Common myeloid progenitor, CD34-positive (primary cell): ENCODE measurements at regions of chr7 and their contacts with region 1.

Region 1: DNA sequence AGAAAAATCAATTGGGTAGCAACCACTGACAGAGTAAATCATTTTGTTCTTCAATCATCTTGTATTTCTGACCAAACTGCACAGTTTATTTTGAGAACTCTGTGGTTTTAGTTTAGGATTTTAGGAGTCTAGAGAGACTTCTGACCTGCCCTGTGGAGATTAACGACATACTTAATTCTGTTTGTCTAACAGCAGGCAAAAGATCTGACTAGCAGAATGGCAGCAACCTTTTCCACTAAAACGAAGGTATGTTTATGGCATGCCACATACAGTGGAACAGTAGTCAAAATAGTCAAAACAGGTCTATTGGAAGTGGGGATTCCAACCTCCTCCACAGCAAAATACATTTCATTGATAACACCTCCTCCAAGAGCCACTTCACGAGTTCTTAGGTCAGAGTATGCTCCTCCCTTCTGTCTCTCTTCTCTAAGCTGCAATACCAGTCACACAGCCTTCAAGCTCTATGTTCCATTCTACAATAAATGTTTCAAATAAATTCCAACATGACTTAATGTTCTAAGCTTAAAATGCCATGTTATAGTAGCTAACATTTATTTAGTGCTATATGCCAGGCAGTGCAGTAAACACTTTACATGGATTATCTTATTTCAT is 34.4 kb downstream of the NRCAM start:
- DNase-seq: no peak
- H3K4me3 ChIP-seq: no peak overlapping the region
- H3K27ac ChIP-seq: no peak overlapping the region
- H3K4me1 ChIP-seq: peaks cover 17 to 44% (median 33%) of the 10 kb centered on the region in 4 experiments
- H3K27me3 ChIP-seq: peaks cover 7 to 60% (median 30%) of the 10 kb centered on the region in 5 experiments

Region 2: GRCh38 chr7:108452722-108453121 is 30.9 kb after region 1 on chr7:
- CTCF ChIA-PET with region 1: interaction called, 11 read pairs
- POLR2A ChIA-PET with region 1: no interaction called
- DNase-seq: peak; percentile 29 to 57 (median 49)
- H3K4me3 ChIP-seq: no peak overlapping the region
- H3K27ac ChIP-seq: no peak overlapping the region
- H3K4me1 ChIP-seq: peaks cover 0 to 22% (median 21%) of the 10 kb centered on the region in 4 experiments
- H3K27me3 ChIP-seq: peaks cover 19 to 87% (median 45%) of the 10 kb centered on the region in 5 experiments